ENCODE measurements at regions of chr12 and their contacts with region 1.

Region 1: GRCh38 chr12:54207484-54208294 is 18.9 kb upstream of the SMUG1 start:
- DNase-seq: peak; percentile 86
- H3K4me3 Mint-ChIP-seq: no peak overlapping the region
- H3K27ac Mint-ChIP-seq: no peak overlapping the region
- H3K4me1 Mint-ChIP-seq: no peaks in the 10 kb centered on the region
- H3K27me3 Mint-ChIP-seq: peaks cover 19% of the 10 kb centered on the region

Region 2: DNA sequence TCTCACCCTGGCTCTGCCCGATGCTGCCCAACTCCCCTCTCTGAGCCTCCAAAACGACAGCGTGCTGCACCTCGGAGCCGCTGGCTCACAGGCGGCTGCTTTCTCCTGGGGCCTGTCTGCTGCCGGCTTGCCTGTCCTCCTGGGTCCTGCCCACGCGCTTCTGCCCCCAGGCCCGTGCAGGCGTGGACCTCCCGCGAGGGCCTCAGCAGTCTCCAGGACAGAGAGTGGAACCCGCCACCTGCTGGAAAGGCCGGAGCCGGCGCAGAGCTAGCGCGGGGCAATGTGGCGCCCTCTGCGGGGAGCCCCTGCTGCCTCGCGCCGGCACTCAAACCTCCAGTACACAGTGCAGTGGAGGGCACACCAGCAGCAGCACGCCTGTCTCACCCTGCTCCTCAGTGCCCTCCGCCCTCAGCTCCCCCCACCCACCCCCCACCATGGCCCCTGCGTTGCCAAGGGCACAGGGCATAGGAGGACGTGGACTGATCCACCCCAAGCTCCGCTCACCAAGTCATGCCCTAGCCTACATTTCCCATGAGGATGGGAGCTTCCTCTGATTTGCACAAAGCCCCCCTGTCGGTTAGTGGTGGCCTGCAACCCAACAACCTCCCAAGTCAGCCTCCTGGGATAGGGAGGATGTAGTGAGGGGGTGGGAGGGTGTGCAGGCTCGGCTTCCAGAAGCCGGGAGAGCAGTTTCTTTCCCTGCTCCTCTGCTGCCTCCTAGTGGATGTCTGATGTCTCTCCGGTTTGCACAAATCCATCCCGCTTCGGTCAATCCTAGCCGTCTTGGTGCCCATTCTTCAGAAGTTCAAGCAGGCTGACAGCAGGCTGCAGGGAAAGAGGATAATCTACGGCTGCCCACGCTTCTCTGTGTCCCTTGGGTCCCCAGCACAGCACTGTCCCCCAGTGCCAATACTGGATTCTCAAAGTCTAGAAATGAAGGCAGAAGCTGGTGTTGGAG is 1328.0 kb before region 1 on chr12:
- CTCF ChIA-PET with region 1: no interaction called
- POLR2A ChIA-PET with region 1: no interaction called
- intact Hi-C with region 1: no loop called
- DNase-seq: peak; percentile 83
- H3K4me3 Mint-ChIP-seq: peak overlapping the region; percentile 65
- H3K27ac Mint-ChIP-seq: no peak overlapping the region
- H3K4me1 Mint-ChIP-seq: peaks cover 7% of the 10 kb centered on the region
- H3K27me3 Mint-ChIP-seq: peaks cover 2% of the 10 kb centered on the region

Region 3: DNA sequence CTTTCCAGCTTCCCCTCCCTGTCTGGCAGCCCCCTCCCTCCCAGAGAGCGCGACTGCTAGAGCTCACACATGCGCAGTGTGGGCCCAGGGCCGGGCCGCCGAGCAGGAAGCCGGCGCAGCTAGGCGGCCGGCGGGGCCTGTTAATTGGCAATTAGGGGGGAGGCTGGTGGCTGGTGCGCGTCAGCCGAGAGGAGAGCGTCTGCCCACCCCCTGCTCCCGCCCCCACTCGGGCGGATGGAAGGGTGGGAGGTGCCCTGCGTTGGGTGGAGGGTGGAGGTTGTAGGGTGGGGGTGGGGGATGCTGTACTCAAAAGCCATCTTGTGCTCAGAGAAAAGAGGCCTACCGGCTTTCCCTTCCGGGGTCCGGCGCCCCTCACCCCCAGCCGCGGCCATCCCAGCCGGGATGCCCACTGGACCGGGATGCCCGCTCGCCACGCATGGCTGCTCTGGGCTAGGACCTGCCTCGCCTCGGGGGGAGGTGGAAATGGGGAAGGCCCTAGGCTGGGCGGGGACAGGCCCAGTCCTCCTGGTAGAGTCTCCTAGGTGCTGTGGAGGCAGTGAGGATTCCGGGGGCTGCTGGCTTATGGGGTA is 189.7 kb before region 1 on chr12:
- CTCF ChIA-PET with region 1: interaction called, 16 read pairs
- POLR2A ChIA-PET with region 1: no interaction called
- intact Hi-C with region 1: no loop called
- DNase-seq: peak; percentile 73
- H3K4me3 Mint-ChIP-seq: peak overlapping the region; percentile 72
- H3K27ac Mint-ChIP-seq: no peak overlapping the region
- H3K4me1 Mint-ChIP-seq: peaks cover 19% of the 10 kb centered on the region
- H3K27me3 Mint-ChIP-seq: peaks cover 69% of the 10 kb centered on the region

Region 4: DNA sequence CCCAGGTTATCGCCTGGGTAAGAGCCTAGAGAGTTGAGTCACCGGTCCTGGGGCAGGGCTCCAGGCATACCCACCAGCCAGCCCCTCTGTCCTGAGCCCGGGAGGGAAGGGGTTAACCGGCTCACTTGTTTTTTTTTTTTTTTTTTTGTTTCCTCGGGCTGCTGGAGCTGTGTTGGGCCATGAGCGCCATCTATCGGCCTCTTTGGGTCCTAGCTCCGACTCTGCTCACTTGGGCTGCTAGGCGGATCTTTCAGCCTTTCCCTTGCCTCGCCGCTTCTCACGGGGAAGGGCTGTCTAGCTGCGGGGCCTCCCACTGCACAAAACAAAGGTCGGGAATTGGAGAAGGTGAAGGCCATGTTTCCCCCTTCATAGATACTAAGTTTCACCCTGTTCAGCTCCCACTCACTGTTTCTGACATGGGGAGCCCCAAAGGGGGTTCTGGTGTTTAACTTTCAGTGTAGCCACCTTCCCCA is 16.1 kb before region 1 on chr12:
- CTCF ChIA-PET with region 1: interaction called, 104 read pairs
- POLR2A ChIA-PET with region 1: no interaction called
- intact Hi-C with region 1: no loop called
- DNase-seq: peak; percentile 83
- H3K4me3 Mint-ChIP-seq: no peak overlapping the region
- H3K27ac Mint-ChIP-seq: no peak overlapping the region
- H3K4me1 Mint-ChIP-seq: peaks cover 17% of the 10 kb centered on the region
- H3K27me3 Mint-ChIP-seq: peaks cover 24% of the 10 kb centered on the region

Region 5: GRCh38 chr12:54352022-54352531 is 144.4 kb after region 1 on chr12:
- CTCF ChIA-PET with region 1: no interaction called
- POLR2A ChIA-PET with region 1: no interaction called
- intact Hi-C with region 1: no loop called
- DNase-seq: peak; percentile 68
- H3K4me3 Mint-ChIP-seq: peak overlapping the region; percentile 59
- H3K27ac Mint-ChIP-seq: peak overlapping the region; percentile 46
- H3K4me1 Mint-ChIP-seq: peaks cover 15% of the 10 kb centered on the region
- H3K27me3 Mint-ChIP-seq: no peaks in the 10 kb centered on the region